Right cardiac atrium (tissue), 5 donors: ENCODE measurements at regions of chr18 and their contacts with region 1.

Region 1: DNA sequence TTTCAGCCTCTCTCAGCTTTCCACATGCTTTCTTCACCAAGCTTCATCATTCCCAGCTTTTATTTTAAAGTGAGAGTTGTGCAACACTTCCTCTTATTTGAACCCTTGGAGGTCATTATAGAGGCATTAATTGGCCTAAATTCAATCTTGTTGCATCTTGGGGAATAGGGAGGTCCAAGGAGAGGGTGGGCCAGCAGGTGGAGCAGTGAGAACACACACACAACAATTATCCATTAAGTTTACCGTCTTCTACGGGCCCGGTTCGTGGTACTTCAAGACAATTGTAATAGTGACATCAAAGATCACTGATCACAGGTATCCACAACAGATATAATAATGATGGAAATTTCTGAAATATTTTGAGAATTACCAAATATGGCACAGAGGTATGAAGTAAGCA is 457.2 kb upstream of the SMIM21 start:
- DNase-seq: peak in 1 of 3 donors; percentile 60
- ATAC-seq: no peak
- H3K4me3 ChIP-seq: no peak overlapping the region
- H3K27ac ChIP-seq: no peak overlapping the region
- H3K4me1 ChIP-seq: no peaks in the 10 kb centered on the region
- H3K27me3 ChIP-seq: no peaks in the 10 kb centered on the region

Region 2: DNA sequence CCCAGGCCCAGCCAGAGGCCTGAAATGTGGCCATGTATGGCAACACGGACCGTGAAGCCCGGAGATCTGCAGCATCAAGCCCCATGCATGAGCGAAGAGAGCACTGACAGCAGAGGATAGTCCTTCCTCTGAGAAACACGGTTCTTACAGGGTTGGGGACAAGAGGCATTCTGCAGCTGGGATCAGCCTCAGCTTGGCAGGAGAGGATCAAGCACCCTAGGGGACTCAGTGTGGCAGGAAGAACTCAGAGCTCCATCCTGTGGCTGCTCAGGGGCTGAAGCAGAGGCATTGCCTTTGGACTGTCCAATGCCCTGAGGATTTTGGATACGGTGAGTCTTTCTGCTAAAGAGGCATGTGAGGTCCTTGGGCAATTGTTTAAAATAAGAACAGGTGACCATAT is 241.6 kb after region 1 on chr18:
- intact Hi-C with region 1: loop called in 1 of 4 experiments (anchors 10 kb)
- DNase-seq: peak in 1 of 3 donors; percentile 50
- ATAC-seq: peak; percentile 52 to 85
- H3K4me3 ChIP-seq: no peak overlapping the region
- H3K27ac ChIP-seq: no peak overlapping the region
- H3K4me1 ChIP-seq: no peaks in the 10 kb centered on the region
- H3K27me3 ChIP-seq: no peaks in the 10 kb centered on the region

Region 3: DNA sequence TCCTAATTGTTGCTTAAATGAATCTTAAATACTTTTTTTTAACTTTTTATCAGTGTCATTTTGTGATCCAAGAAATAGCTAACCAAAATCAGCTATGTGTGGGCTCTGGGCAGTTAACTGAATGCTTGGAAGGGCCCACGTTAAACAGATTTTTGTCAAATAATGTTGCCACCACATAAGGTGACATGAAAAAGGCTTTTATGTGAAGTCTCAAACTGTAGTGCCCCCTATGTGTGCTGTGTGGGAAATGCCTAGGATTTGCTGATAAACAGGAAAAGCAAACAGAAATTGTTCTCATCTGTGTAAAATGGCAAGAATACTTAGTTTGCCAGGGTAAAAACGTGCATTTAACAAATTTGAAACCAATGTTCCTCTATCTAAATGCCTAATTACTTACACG is 368.2 kb after region 1 on chr18:
- intact Hi-C with region 1: loop called in 1 of 4 experiments (anchors 10 kb)
- DNase-seq: no peak
- ATAC-seq: no peak
- H3K4me3 ChIP-seq: no peak overlapping the region
- H3K27ac ChIP-seq: no peak overlapping the region
- H3K4me1 ChIP-seq: no peaks in the 10 kb centered on the region
- H3K27me3 ChIP-seq: no peaks in the 10 kb centered on the region